Caco-2 (cell line): ENCODE measurements at regions of chr20 and their contacts with region 1.

Region 1: GRCh38 chr20:31760519-31761240 is 21.6 kb downstream of the TPX2 start:
- DNase-seq: no peak
- H3K4me3 ChIP-seq: no peak overlapping the region
- H3K4me3 Mint-ChIP-seq: no peak overlapping the region
- H3K27ac Mint-ChIP-seq: peak overlapping the region; percentile 32
- H3K4me1 ChIP-seq: peaks cover 19% of the 10 kb centered on the region
- H3K4me1 Mint-ChIP-seq: peaks cover 32% of the 10 kb centered on the region
- H3K27me3 ChIP-seq: no peaks in the 10 kb centered on the region
- H3K27me3 Mint-ChIP-seq: no peaks in the 10 kb centered on the region
- CTCF ChIP-seq: no peak

Region 2: GRCh38 chr20:31738729-31739561 is 21.7 kb before region 1 on chr20 and contains the start of gene TPX2:
- CTCF ChIA-PET with region 1: no interaction called
- POLR2A ChIA-PET with region 1: interaction called, 6 read pairs
- intact Hi-C with region 1: loop called (anchors 1 kb)
- DNase-seq: peak; percentile 99 to 100
- H3K4me3 ChIP-seq: peak within 1 kb of the TSS; percentile 72
- H3K4me3 Mint-ChIP-seq: no peak within 1 kb of the TSS
- H3K27ac Mint-ChIP-seq: no peak within 1 kb of the TSS
- H3K4me1 ChIP-seq: 0 out of 2 replicates have a peak, but pooled peaks cover 6% of the 10 kb centered on the region
- H3K4me1 Mint-ChIP-seq: no peaks in the 10 kb centered on the region
- H3K27me3 ChIP-seq: no peaks in the 10 kb centered on the region
- H3K27me3 Mint-ChIP-seq: no peaks in the 10 kb centered on the region
- CTCF ChIP-seq: peak in 1 of 2 experiments; percentile 66
- total RNA-seq, gene TPX2: 221 and 237 TPM in 2 replicates

Region 3: DNA sequence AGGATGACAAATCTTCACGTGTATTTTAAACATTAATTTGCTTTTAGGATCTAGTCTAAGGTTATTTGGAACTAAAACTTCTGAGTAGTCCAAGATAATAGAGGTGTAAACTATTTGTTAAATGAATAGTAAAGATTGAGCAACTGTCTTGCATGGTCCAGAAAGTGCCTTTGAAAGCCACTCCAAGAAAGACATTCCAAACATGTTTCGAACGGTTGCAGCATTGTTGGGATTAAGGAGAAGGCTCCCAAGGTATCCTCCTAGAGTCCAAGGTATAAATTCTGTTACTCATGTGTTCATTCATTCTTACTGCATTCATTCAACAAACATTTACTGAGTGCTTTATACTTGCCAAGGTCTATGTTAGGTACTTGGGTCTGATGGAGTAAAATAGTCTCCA is 29.7 kb after region 1 on chr20:
- CTCF ChIA-PET with region 1: no interaction called
- POLR2A ChIA-PET with region 1: no interaction called
- intact Hi-C with region 1: loop called (anchors 2 kb)
- DNase-seq: peak; percentile 83 to 89
- H3K4me3 ChIP-seq: no peak overlapping the region
- H3K4me3 Mint-ChIP-seq: no peak overlapping the region
- H3K27ac Mint-ChIP-seq: no peak overlapping the region
- H3K4me1 ChIP-seq: peaks cover 39% of the 10 kb centered on the region
- H3K4me1 Mint-ChIP-seq: peaks cover 18% of the 10 kb centered on the region
- H3K27me3 ChIP-seq: no peaks in the 10 kb centered on the region
- H3K27me3 Mint-ChIP-seq: no peaks in the 10 kb centered on the region
- CTCF ChIP-seq: no peak

Region 4: DNA sequence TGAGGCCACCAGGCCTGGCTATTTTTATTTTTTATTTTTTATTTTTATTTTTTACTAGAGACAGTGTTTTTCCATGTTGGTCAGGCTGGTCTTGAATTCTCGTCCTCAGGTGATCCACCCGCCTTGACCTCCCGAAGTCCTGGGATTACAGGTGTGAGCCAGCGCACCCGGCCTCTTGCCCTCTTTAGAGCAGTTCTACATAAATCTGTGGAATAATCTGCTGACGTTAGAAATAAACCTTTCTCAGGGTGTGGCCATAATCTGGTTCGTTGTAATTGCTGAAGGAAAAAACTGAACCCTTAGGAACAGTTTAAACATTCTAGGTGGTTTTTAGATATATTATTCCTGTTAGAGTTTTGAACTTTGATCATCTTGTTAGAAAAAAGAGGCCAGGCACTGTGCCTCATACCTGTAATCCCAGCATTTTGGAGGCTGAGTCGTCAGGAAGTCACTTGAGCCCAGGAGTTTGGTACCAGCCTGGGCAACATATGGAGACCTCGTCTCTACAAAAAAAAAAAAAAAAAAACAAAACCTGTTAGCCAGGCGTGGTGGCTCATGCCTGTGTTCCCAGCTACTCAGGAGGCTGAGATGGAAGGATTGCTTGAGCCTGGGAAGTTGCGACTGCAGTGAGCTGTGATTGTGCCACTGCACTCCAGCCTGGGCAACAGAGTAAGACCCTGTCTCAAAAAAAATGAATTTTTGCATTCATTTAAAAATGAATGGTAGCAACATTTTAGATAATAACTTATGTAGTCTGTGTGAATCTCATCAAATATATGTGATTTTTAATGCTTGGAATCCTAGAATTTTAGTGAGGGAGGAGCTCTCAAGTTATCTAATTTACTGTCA is 621.6 kb after region 1 on chr20:
- CTCF ChIA-PET with region 1: no interaction called
- POLR2A ChIA-PET with region 1: interaction called, 10 read pairs
- intact Hi-C with region 1: no loop called
- DNase-seq: no peak
- H3K4me3 ChIP-seq: no peak overlapping the region
- H3K4me3 Mint-ChIP-seq: no peak overlapping the region
- H3K27ac Mint-ChIP-seq: peak overlapping the region; percentile 34
- H3K4me1 ChIP-seq: peaks cover 4% of the 10 kb centered on the region; the same call in 1 of the 2 replicates
- H3K4me1 Mint-ChIP-seq: peaks cover 10% of the 10 kb centered on the region
- H3K27me3 ChIP-seq: no peaks in the 10 kb centered on the region
- H3K27me3 Mint-ChIP-seq: no peaks in the 10 kb centered on the region
- CTCF ChIP-seq: no peak